ENCODE measurements at regions of chr2 and their contacts with region 1.

Region 1: DNA sequence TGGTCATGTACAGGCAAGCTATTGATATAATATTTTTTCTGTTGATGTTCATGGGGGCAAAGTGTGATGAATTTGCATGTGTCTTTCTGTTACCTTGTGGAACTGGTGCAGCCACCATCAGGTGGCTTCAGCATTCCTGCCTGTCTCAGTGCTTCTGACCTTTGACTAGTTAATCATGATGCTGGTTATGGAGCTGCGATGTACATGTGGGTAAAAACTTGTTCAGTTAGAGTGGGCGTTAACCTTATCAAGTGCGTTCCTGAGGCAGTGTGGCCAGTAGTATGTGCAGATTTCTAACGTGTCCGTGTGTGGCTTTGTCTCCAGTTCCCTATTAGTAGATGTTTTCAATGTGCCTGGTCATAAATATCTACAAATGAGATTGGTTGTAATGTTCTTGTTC is 127.4 kb upstream of the ZSWIM2 start:
- DNase-seq: no peak
- ATAC-seq: no peak
- H3K4me3 ChIP-seq: no peak overlapping the region
- H3K27ac ChIP-seq: no peak overlapping the region
- H3K4me1 ChIP-seq: no peaks in the 10 kb centered on the region
- H3K27me3 ChIP-seq: no peaks in the 10 kb centered on the region
- CTCF ChIP-seq: no peak
- EP300 ChIP-seq: no peak
- POLR2A ChIP-seq: no peak
- RAD21 ChIP-seq: no peak

Region 2: DNA sequence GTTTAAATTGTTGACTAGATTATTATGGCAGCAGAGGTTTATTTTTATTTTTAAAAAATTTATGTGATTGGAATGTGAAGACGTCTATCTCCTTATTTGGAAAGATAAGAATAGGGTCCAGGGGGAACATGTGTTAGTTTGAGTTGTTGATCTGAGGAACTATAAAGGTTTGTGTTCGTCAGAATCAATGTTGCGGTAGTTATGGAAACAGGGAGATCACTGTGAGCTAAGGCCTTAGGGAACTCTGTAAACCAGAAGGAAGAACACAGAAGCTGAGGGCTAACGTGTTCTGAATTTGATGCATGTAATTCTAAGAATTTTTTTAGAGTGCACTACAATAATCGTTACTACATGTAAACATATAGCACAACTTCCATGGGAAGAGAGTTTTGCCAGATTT is 41.1 kb after region 1 on chr2:
- CTCF ChIA-PET with region 1: no interaction called
- POLR2A ChIA-PET with region 1: no interaction called
- RAD21 ChIA-PET with region 1: no interaction called
- SMC1A ChIA-PET with region 1: no interaction called
- in situ Hi-C with region 1: no loop called
- intact Hi-C with region 1: loop called (anchors 1 kb)
- DNase-seq: no peak
- ATAC-seq: no peak
- H3K4me3 ChIP-seq: no peak overlapping the region
- H3K27ac ChIP-seq: no peak overlapping the region
- H3K4me1 ChIP-seq: no peaks in the 10 kb centered on the region
- H3K27me3 ChIP-seq: no peaks in the 10 kb centered on the region
- CTCF ChIP-seq: no peak
- EP300 ChIP-seq: no peak
- POLR2A ChIP-seq: no peak
- RAD21 ChIP-seq: no peak

Region 3: GRCh38 chr2:187168720-187169713 is 192.7 kb after region 1 on chr2:
- CTCF ChIA-PET with region 1: no interaction called
- POLR2A ChIA-PET with region 1: no interaction called
- RAD21 ChIA-PET with region 1: no interaction called
- SMC1A ChIA-PET with region 1: no interaction called
- in situ Hi-C with region 1: no loop called
- intact Hi-C with region 1: no loop called
- DNase-seq: peak; percentile 7
- ATAC-seq: peak; percentile 86
- H3K4me3 ChIP-seq: no peak overlapping the region
- H3K27ac ChIP-seq: peak overlapping the region; percentile 53
- H3K4me1 ChIP-seq: peaks cover 27% of the 10 kb centered on the region
- H3K27me3 ChIP-seq: no peaks in the 10 kb centered on the region
- CTCF ChIP-seq: no peak
- EP300 ChIP-seq: peak; percentile 74 to 88; a peak in 3 of 4 replicates
- POLR2A ChIP-seq: no peak
- RAD21 ChIP-seq: no peak